ENCODE measurements at regions of chr16 and their contacts with region 1.

Region 1: GRCh38 chr16:31142109-31143010 is 6.8 kb upstream of the PRSS8 start:
- DNase-seq: peak; percentile 91 to 98 (median 95)
- ATAC-seq: peak; percentile 95
- H3K4me3 ChIP-seq: peak overlapping the region; percentile 68
- H3K4me3 Mint-ChIP-seq: peak overlapping the region; percentile 61 to 84 (median 72)
- H3K27ac ChIP-seq: peak overlapping the region; percentile 74
- H3K27ac Mint-ChIP-seq: peak overlapping the region; percentile 73 to 94 (median 84)
- H3K4me1 ChIP-seq: peaks cover 6 to 14% of the 10 kb centered on the region in 2 donors
- H3K4me1 Mint-ChIP-seq: peaks cover 0 to 17% (median 14%) of the 10 kb centered on the region in 7 donors
- H3K27me3 ChIP-seq: no peaks in the 10 kb centered on the region
- H3K27me3 Mint-ChIP-seq: peaks cover 0 to 3% (median 0%) of the 10 kb centered on the region in 5 donors

Region 2: DNA sequence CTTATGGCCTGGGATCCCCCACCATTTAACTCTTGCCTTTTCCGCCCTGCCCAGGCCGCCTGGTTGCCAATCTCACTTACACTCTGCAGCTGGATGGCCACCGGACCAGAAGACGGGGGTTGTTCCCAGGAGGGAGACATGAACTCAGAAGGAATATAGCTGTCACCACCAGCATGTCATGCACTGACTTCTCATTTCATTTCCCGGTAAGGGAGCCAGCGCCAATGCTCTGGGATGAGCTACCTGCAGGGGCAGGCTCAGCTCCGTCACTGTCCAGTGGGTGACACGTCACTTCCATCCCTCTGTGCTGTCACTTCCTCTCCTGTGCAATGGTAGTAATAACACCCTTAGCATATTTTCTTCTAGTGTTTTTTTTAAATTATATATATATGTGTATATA is 643.1 kb before region 1 on chr16:
- CTCF ChIA-PET with region 1: no interaction called
- POLR2A ChIA-PET with region 1: no interaction called
- intact Hi-C with region 1: no loop called
- DNase-seq: no peak
- ATAC-seq: no peak
- H3K4me3 ChIP-seq: no peak overlapping the region
- H3K4me3 Mint-ChIP-seq: no peak overlapping the region
- H3K27ac ChIP-seq: no peak overlapping the region
- H3K27ac Mint-ChIP-seq: peak overlapping the region in 3 of 9 donors; percentile 33 to 44 (median 36)
- H3K4me1 ChIP-seq: no peaks in the 10 kb centered on the region
- H3K4me1 Mint-ChIP-seq: peaks cover 0 to 23% (median 12%) of the 10 kb centered on the region in 7 donors
- H3K27me3 ChIP-seq: no peaks in the 10 kb centered on the region
- H3K27me3 Mint-ChIP-seq: no peaks in the 10 kb centered on the region

Region 3: GRCh38 chr16:30748635-30749446 is 393.5 kb before region 1 on chr16:
- CTCF ChIA-PET with region 1: no interaction called
- POLR2A ChIA-PET with region 1: no interaction called
- intact Hi-C with region 1: no loop called
- DNase-seq: peak in 1 of 9 donors; percentile 5
- ATAC-seq: peak; percentile 15
- H3K4me3 ChIP-seq: peak overlapping the region; percentile 51
- H3K4me3 Mint-ChIP-seq: peak overlapping the region; percentile 78 to 98 (median 90)
- H3K27ac ChIP-seq: peak overlapping the region; percentile 75
- H3K27ac Mint-ChIP-seq: peak overlapping the region in 8 of 9 donors; percentile 75 to 95 (median 88)
- H3K4me1 ChIP-seq: peaks cover 4 to 6% of the 10 kb centered on the region in 2 donors
- H3K4me1 Mint-ChIP-seq: peaks cover 16 to 29% (median 27%) of the 10 kb centered on the region in 7 donors
- H3K27me3 ChIP-seq: no peaks in the 10 kb centered on the region
- H3K27me3 Mint-ChIP-seq: no peaks in the 10 kb centered on the region

Region 4: GRCh38 chr16:30957456-30958174 is 184.7 kb before region 1 on chr16 and contains the start of gene SETD1A:
- CTCF ChIA-PET with region 1: interaction called, 3 read pairs
- POLR2A ChIA-PET with region 1: interaction called, 5 read pairs
- intact Hi-C with region 1: loop called (anchors 1 kb)
- DNase-seq: peak; percentile 94 to 99 (median 97)
- ATAC-seq: peak; percentile 93
- H3K4me3 ChIP-seq: peak within 1 kb of the TSS; percentile 100
- H3K4me3 Mint-ChIP-seq: peak within 1 kb of the TSS; percentile 81 to 97 (median 96)
- H3K27ac ChIP-seq: peak within 1 kb of the TSS; percentile 93
- H3K27ac Mint-ChIP-seq: peak within 1 kb of the TSS; percentile 97 to 100 (median 98)
- H3K4me1 ChIP-seq: peaks cover 16 to 22% of the 10 kb centered on the region in 2 donors
- H3K4me1 Mint-ChIP-seq: peaks cover 23 to 46% (median 29%) of the 10 kb centered on the region in 7 donors
- H3K27me3 ChIP-seq: no peaks in the 10 kb centered on the region
- H3K27me3 Mint-ChIP-seq: peaks cover 0 to 3% (median 0%) of the 10 kb centered on the region in 5 donors
- total RNA-seq, gene SETD1A: 27.0 to 47.2 (median 36.8) TPM

Region 5: DNA sequence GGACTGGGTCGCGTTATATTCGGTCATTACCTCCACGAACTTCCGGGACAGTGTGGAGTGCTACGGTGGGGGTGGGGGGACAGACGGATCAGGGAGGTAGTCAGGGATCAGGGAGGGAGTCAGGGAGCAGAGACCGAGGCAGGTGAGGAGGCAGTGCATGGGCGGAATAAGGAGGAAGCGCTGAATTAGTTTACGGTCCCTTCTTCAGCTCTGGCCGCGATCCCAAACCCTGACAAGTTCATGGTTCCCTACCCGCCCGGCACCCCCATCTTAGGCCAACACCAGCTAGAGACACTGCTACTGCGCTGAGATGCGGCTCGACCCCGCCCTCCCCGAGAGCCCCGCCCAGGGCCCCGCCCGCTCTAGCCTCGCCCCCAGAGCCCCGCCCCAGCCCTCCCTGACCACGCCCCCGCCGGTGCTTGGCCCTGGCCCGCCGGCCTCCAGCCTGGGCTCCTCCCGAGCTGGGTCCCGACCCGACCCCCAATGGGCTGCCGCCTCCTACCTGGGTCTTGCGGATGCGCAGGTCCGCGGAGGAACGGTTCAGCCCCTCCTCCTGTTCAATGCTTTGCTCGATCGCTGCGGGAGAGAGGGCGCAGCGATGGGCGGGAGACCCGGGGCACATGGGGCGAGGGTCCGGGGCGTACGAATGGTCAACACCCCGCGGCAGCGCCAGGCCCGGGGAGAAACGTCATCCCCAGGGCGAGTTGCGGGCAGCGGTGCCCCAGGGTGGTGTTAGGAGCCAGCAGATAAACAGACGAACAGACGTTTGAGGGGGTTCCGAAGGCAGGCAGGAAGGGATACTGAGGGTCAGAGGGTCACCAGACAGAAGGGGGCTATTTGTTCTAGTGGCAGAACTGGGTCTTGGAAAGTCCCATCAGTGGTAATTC is 145.1 kb before region 1 on chr16:
- CTCF ChIA-PET with region 1: no interaction called
- POLR2A ChIA-PET with region 1: no interaction called
- intact Hi-C with region 1: loop called in 1 of 2 experiments (anchors 1 kb)
- DNase-seq: peak; percentile 45 to 80 (median 66)
- ATAC-seq: peak; percentile 99
- H3K4me3 ChIP-seq: peak overlapping the region; percentile 78
- H3K4me3 Mint-ChIP-seq: peak overlapping the region; percentile 66 to 90 (median 82)
- H3K27ac ChIP-seq: peak overlapping the region; percentile 61
- H3K27ac Mint-ChIP-seq: peak overlapping the region in 7 of 9 donors; percentile 58 to 87 (median 74)
- H3K4me1 ChIP-seq: peaks cover 5 to 11% of the 10 kb centered on the region in 2 donors
- H3K4me1 Mint-ChIP-seq: peaks cover 0 to 9% (median 6%) of the 10 kb centered on the region in 7 donors
- H3K27me3 ChIP-seq: no peaks in the 10 kb centered on the region
- H3K27me3 Mint-ChIP-seq: peaks cover 0 to 3% (median 0%) of the 10 kb centered on the region in 5 donors

Region 6: DNA sequence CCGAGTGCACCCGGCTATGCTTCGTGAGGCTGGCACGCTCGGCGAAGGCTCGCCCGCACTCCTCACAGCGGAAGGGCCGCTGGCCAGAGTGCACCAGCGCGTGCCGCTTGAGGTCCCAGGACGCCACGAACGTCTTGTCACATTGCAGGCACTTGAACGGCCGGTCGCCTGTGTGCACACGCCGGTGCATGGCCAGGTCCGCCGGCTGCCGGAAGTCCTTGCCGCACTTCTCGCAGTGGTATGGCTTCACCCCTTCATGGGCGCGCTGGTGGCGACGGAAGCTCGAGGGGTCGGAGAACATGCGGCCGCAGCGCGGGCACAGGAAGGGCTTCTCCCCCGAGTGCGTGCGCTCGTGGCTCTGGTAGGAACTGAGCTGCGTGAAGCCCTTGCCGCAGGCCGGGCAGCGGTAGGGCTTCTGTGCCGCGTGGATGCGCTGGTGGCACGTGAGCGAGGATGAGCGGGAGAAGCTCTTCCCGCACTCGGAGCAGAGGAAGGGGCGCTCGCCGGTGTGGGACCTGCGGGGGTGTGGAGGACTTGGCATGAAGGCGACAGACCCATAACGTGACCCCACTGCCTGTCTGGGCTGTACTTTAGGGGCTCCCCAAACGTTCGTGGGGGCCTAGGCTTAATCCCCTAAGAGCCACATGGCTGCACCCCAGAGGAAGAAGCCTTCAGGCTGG is 80.5 kb before region 1 on chr16:
- CTCF ChIA-PET with region 1: no interaction called
- POLR2A ChIA-PET with region 1: no interaction called
- intact Hi-C with region 1: no loop called
- DNase-seq: no peak
- ATAC-seq: no peak
- H3K4me3 ChIP-seq: no peak overlapping the region
- H3K4me3 Mint-ChIP-seq: no peak overlapping the region
- H3K27ac ChIP-seq: no peak overlapping the region
- H3K27ac Mint-ChIP-seq: no peak overlapping the region
- H3K4me1 ChIP-seq: peaks cover 19 to 44% of the 10 kb centered on the region in 2 donors
- H3K4me1 Mint-ChIP-seq: peaks cover 21 to 49% (median 38%) of the 10 kb centered on the region in 7 donors
- H3K27me3 ChIP-seq: no peaks in the 10 kb centered on the region
- H3K27me3 Mint-ChIP-seq: no peaks in the 10 kb centered on the region

Region 7: GRCh38 chr16:31108035-31108793 is 34.1 kb before region 1 on chr16 and contains the start of gene BCKDK:
- CTCF ChIA-PET with region 1: interaction called, 5 read pairs
- POLR2A ChIA-PET with region 1: interaction called, 5 read pairs
- intact Hi-C with region 1: loop called (anchors 2 kb)
- DNase-seq: peak; percentile 31 to 84 (median 39)
- ATAC-seq: peak; percentile 82
- H3K4me3 ChIP-seq: peak within 1 kb of the TSS; percentile 74
- H3K4me3 Mint-ChIP-seq: peak within 1 kb of the TSS; percentile 77 to 91 (median 85)
- H3K27ac ChIP-seq: peak within 1 kb of the TSS; percentile 82
- H3K27ac Mint-ChIP-seq: peak within 1 kb of the TSS; percentile 58 to 88 (median 84)
- H3K4me1 ChIP-seq: peaks cover 4 to 16% of the 10 kb centered on the region in 2 donors
- H3K4me1 Mint-ChIP-seq: peaks cover 10 to 32% (median 19%) of the 10 kb centered on the region in 7 donors
- H3K27me3 ChIP-seq: no peaks in the 10 kb centered on the region
- H3K27me3 Mint-ChIP-seq: no peaks in the 10 kb centered on the region
- total RNA-seq, gene BCKDK: 10.3 to 30.8 (median 20.8) TPM

Region 8: GRCh38 chr16:31157136-31157535 is 14.8 kb after region 1 on chr16:
- CTCF ChIA-PET with region 1: interaction called, 9 read pairs
- POLR2A ChIA-PET with region 1: interaction called, 10 read pairs
- intact Hi-C with region 1: no loop called
- DNase-seq: no peak
- ATAC-seq: peak; percentile 74
- H3K4me3 ChIP-seq: no peak overlapping the region
- H3K4me3 Mint-ChIP-seq: peak overlapping the region in 8 of 10 donors; percentile 7 to 66 (median 36)
- H3K27ac ChIP-seq: no peak overlapping the region
- H3K27ac Mint-ChIP-seq: peak overlapping the region in 3 of 9 donors; percentile 16 to 38 (median 25)
- H3K4me1 ChIP-seq: no peaks in the 10 kb centered on the region
- H3K4me1 Mint-ChIP-seq: peaks cover 0 to 12% (median 10%) of the 10 kb centered on the region in 7 donors
- H3K27me3 ChIP-seq: no peaks in the 10 kb centered on the region
- H3K27me3 Mint-ChIP-seq: peaks cover 0 to 17% (median 0%) of the 10 kb centered on the region in 5 donors

Region 9: DNA sequence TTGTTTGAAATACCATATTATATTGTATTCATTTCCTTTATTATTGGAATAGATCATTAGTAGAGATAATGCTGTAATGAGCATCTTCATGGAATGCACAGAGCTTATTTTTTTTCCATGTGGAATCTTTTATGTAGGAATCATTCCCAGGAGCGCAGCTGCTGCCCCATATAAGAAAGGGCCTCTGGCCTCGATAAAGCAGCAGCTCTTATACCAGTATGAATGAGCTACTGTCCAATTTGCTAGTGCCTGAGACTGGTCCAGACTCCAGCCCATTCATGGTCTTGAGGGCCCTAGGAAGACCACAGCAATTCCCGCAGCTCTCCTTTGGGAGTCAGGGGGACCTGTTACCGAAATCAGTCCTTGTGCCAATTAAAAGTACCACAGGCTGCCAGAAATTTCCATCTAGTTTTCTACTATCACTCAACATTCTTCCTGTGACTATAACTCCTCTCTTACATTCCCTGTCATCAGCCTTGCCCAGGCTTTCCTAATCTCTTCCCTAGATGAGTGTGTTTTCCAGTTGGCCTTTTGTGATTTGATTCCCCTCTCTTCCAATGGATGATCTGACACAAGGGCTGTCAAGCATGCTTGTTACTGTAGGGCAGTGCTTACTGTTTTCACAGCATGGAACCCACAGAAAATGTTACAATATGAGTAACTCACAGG is 298.3 kb after region 1 on chr16:
- CTCF ChIA-PET with region 1: interaction called, 3 read pairs
- POLR2A ChIA-PET with region 1: no interaction called
- intact Hi-C with region 1: loop called (anchors 1 kb)
- DNase-seq: no peak
- ATAC-seq: no peak
- H3K4me3 ChIP-seq: no peak overlapping the region
- H3K4me3 Mint-ChIP-seq: peak overlapping the region in 1 of 10 donors; percentile 22
- H3K27ac ChIP-seq: no peak overlapping the region
- H3K27ac Mint-ChIP-seq: no peak overlapping the region
- H3K4me1 ChIP-seq: no peaks in the 10 kb centered on the region
- H3K4me1 Mint-ChIP-seq: peaks cover 0 to 23% (median 9%) of the 10 kb centered on the region in 7 donors
- H3K27me3 ChIP-seq: no peaks in the 10 kb centered on the region
- H3K27me3 Mint-ChIP-seq: peaks cover 0 to 3% (median 0%) of the 10 kb centered on the region in 5 donors